ENCODE measurements at regions of chr16 and their contacts with region 1.

Region 1: GRCh38 chr16:352547-353403 is at the start of gene AXIN1:
- DNase-seq: peak; percentile 90 to 99 (median 94)
- ATAC-seq: peak; percentile 89
- H3K4me3 ChIP-seq: peak within 1 kb of the TSS; percentile 78
- H3K27ac ChIP-seq: peak within 1 kb of the TSS; percentile 81
- H3K4me1 ChIP-seq: peaks cover 26 to 35% of the 10 kb centered on the region in 2 experiments
- H3K27me3 ChIP-seq: no peaks in the 10 kb centered on the region
- CTCF ChIP-seq: peak in 2 of 3 experiments; percentile 62 to 81; a peak in 3 of 6 replicates
- EP300 ChIP-seq: no peak
- POLR2A ChIP-seq: peak; percentile 66
- RAD21 ChIP-seq: peak in 1 of 2 experiments; percentile 54; a peak in 3 of 4 replicates
- polyA plus RNA-seq, gene AXIN1: 0.42 to 0.77 TPM

Region 2: DNA sequence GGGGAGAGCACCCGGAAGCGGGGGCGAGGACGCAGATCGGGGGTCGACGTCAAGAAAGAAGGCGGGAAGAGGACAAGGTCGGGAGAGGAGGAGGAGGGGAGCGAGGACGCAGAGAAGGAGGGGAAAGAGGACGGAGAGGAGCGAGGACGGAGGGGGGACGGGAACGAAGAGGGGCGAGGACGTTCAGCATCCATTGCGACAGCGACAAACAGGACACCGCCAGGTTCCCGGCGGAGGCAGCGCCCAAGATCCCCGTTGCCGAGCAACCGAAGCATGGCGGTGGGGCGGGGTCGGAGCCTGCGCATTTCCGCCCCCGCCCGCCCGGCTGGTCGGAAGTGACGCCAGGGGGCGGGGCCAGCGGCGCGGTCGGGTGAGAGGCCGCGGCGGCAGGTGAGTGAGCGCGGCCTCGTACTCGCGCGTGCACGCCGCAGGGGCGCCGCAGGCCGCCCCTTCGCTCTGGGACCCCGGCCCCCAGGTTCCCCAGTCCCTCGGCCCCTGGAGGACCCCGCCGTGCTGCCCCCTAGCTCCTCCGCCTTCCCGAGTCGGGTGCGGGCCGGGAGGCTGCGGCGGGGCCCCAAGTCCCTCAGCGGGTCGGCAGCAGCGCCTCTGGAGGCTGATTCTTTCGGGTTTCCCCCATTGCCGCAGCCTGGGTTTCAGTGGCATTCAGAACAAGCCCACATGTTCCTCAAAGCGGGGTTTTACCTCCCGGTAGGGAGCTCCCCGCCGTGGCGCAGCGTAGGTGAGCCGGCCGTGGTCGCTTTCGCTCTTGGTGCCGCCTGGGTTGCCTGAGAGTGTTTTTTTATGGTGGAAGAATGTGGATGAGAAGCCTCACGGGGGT is 118.1 kb before region 1 on chr16 and contains the start of gene FAM234A:
- CTCF ChIA-PET with region 1: no interaction called
- POLR2A ChIA-PET with region 1: interaction called, 3 read pairs
- in situ Hi-C with region 1: no loop called
- intact Hi-C with region 1: loop called (anchors 5 kb)
- DNase-seq: peak; percentile 93 to 97 (median 95)
- ATAC-seq: peak; percentile 90
- H3K4me3 ChIP-seq: peak within 1 kb of the TSS; percentile 87
- H3K27ac ChIP-seq: peak within 1 kb of the TSS; percentile 92
- H3K4me1 ChIP-seq: peaks cover 7 to 29% of the 10 kb centered on the region in 2 experiments
- H3K27me3 ChIP-seq: no peaks in the 10 kb centered on the region
- CTCF ChIP-seq: peak; percentile 50 to 68 (median 59); a peak in 5 of 6 replicates
- EP300 ChIP-seq: no peak
- POLR2A ChIP-seq: peak; percentile 84
- RAD21 ChIP-seq: peak; percentile 2 to 28; a peak in 3 of 4 replicates
- polyA plus RNA-seq, gene FAM234A: 1.0 to 1.6 TPM

Region 3: DNA sequence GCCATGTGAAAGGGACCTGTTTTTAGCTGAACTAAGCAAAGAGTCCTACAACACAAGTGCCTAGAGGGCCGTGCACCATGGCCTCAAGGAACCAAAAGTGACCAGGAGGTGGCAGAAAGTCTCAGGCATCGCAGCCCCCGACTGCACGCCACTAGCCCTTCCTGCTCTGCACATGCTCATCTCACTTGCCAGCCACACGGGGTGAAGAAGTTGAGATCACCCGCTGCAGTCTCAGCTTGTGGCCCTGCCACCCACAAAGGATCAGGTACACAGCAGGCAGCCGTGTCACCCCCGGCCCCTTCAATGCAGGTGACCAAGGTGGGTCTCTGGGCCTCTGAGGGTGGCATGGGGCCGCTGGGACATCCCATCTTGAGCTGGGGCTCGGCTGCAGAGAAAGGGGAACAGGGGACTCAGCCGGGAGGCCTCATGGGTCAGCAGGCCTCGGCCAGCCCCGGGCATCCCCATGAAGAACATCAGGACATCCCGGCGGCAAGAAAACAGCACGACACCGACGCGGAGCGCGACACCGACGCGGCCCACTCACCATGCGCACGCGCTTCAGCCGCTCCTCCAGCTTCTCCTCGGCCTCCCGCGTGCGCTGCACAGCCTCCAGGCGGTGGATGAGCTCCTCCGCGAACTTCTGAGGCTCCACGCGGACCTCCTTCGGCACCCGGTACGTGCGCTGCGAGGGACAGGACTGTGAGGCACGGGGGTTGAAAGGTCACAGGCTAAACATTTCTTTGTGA is 48.8 kb before region 1 on chr16:
- CTCF ChIA-PET with region 1: no interaction called
- POLR2A ChIA-PET with region 1: no interaction called
- in situ Hi-C with region 1: no loop called
- intact Hi-C with region 1: no loop called
- DNase-seq: peak in 1 of 4 experiments; percentile 14
- ATAC-seq: peak; percentile 56
- H3K4me3 ChIP-seq: no peak overlapping the region
- H3K27ac ChIP-seq: no peak overlapping the region
- H3K4me1 ChIP-seq: peaks cover 0 to 18% of the 10 kb centered on the region in 2 experiments; a peak in 1 of 5 replicates
- H3K27me3 ChIP-seq: no peaks in the 10 kb centered on the region
- CTCF ChIP-seq: peak in 2 of 3 experiments; percentile 14 to 19; a peak in 2 of 6 replicates
- EP300 ChIP-seq: no peak
- POLR2A ChIP-seq: no peak
- RAD21 ChIP-seq: peak in 1 of 2 experiments; percentile 15; a peak in 1 of 4 replicates